Cardiac septum (tissue), 1 donor: ENCODE measurements at regions of chr2 and their contacts with region 1.

Region 1: DNA sequence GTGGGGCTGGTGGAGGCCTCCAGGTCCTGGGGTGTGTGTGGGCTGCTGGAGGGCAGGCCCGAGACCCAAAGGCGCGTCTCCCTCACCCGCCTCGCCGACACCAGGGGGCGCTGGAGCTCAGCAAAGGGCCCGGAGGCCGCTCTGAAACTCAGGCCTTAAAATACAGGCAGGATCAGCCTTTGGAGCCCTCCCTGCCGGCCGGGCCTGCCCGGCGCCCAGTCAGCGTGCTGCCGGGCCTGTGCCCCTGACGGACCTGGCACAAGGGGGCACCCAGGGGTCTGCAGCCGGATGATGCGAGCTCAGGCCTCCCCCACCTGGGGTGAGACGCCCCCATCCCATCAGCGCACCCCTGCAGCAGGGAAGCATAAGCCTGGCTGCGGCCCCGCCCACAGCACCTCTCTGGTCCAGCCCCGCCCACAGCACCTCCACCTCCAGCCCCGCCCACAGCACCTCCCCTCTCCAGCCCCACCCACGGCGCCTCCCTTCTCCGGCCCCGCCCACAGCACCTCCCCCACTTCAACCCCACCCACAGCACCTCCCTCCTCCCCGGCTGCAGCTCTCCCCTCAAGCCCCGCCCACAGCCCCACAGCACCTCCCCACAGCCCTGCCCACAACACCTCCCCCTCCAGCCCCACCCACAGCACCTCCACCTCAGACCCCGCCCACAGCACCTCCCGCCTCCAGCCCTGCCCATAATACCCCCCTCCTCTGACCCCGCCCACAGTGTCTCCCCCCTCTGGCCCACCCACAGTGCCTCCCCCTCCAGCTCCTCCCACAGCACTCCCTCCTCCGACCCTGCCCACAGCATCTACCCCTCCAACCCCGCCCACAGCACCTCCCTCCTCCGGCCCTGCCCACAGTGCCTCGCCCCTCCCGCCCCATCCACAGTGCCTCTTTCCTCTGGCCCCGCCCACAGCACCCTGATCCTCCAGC is 92.8 kb upstream of the OTOS start:
- DNase-seq: peak; percentile 93

Region 2: GRCh38 chr2:240250985-240251847 is 18.0 kb after region 1 on chr2:
- intact Hi-C with region 1: loop called (anchors 1 kb)
- DNase-seq: peak; percentile 89

Region 3: DNA sequence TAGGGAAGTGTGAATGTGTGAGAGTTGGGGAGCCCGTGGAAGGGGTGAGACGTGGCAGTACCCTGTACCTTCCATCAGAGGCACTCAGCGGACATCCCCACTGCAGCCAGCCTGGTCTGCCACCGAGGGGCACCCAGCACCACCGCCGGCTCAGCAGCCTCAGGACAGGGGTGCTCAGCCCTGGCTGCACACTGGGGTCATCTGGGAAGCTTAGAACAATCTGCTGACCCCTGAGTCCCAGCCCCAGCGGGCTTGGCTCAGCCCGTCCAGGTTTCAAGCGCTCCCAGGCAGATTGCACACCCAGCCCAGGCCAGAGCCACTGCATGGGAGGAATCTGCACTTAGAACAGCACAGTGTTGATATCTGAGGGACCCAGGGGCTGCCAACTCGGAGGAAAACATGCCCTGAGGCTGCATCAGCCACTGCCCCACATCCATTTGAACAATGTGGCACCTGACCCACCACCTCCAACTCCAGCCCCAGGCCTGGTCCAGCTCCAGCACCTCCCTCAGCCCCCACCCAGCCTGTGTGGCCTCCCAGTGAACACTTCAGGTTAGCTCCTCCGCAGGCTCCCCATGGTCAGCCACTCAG is 54.4 kb after region 1 on chr2:
- intact Hi-C with region 1: loop called (anchors 2 kb)
- DNase-seq: peak; percentile 67

Region 4: GRCh38 chr2:240351826-240352426 is 118.7 kb after region 1 on chr2:
- intact Hi-C with region 1: loop called (anchors 5 kb)
- DNase-seq: no peak

Region 5: DNA sequence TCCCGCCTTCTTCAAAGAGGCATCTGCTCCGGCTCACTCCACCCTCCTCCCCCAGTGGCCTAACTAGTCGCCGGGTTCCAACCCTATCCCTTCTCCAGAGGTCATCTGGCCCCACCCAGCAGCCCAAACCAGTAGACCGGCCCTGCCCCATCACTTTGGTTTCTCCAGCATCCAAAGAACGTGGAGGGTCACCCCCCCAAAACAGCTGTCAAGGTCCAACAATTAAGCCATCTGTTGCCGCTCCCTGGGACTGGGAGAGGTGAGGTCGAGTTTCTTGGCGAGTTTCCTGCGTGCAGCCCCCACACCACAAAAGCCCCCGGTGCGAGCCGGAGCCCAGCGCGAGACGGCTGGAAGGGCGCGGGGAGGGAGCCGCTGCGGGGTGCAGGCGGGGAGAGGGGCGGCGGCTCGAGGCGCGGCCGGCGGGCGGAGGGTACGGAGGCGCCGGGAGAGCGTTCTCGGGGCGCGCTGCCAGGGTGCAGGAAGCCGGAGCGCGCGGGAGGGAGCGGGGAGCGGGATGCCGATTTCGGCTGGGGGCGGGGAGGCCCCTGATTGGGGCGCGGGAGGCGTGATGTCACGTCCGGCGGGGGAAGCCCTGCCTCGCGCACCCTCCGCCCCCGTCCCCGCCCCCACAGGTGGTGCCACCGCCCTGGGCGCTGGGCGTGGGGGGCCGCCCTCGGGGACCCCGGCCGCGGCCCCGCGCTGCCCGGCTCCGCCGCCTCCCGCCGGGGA is 201.7 kb after region 1 on chr2:
- intact Hi-C with region 1: loop called (anchors 1 kb)
- DNase-seq: peak; percentile 94